ENCODE measurements at regions of chr7 and their contacts with region 1.

Region 1: DNA sequence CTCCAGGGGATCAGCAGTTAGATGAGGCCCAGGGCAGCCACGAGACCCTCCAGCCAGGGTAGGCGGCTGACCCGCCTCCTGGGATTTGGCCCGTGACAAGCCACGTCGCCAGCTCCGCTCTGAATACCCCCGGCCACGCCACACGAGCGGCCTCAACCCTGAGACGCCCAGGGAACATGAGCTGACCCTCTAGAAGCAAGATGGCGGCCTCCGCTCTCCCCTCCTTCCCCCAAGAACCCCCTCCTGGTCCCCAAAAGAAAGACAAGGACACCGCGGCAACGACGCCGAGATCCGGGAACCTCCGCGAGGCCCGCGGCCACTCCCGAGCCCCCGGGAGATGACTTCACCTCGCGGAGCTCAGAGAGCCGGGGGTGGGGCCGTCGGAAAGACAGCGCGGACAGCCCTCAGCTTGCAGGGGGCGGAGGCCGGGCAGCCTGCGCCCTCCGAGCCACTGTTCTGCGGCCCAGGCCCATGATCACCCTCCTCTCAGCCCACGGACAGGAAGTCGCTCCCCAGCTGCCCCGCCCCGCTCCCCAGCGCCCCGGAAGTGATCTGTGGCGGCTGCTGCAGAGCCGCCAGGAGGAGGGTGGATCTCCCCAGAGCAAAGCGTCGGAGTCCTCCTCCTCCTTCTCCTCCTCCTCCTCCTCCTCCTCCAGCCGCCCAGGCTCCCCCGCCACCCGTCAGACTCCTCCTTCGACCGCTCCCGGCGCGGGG is at the start of gene RALA:
- DNase-seq: peak; percentile 84
- ATAC-seq: peak; percentile 91
- H3K4me3 Mint-ChIP-seq: peak within 1 kb of the TSS; percentile 94
- H3K27ac Mint-ChIP-seq: peak within 1 kb of the TSS; percentile 91
- H3K4me1 Mint-ChIP-seq: peaks cover 55% of the 10 kb centered on the region
- H3K27me3 Mint-ChIP-seq: no peaks in the 10 kb centered on the region
- CTCF ChIP-seq: no peak
- total RNA-seq, gene RALA: 32.6 and 37.3 TPM in 2 replicates

Region 2: DNA sequence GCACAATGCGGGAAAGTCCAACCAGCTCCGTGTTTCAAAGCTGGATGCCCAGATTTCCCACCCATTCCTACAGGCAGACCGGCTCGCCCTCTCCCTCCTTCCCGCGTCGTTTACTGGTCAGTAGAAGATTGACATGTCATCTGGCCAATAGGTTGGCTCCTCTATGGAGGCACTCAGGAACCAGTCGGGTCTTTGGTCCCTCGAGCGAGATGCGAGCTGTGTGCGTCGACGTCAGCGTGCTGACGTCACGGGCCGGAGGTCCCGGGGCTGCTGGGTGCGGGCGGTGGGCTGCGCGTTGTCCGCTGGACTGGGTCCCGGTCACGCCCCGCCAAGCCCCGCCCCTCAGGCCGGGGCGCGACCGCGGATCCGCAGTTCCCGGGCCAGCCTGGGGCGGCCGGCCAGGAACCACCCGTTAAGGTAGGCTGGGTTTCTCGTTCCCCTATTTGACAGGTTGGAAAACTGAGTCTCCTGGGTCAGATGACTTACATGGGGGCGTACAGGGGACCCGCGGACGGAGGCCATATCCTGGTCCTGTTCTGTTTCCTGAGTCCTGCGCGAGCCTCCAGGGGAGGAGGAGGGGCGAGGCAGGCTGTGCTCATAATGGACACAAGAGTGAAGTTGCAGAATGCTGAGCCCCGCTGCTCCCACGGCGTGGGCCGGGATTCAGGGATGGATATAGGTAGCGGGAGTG is 1445.0 kb before region 1 on chr7 and contains the start of gene STARD3NL:
- CTCF ChIA-PET with region 1: no interaction called
- POLR2A ChIA-PET with region 1: no interaction called
- intact Hi-C with region 1: loop called (anchors 10 kb)
- DNase-seq: peak; percentile 81
- ATAC-seq: peak; percentile 96
- H3K4me3 Mint-ChIP-seq: peak within 1 kb of the TSS; percentile 97
- H3K27ac Mint-ChIP-seq: peak within 1 kb of the TSS; percentile 93
- H3K4me1 Mint-ChIP-seq: peaks cover 36% of the 10 kb centered on the region
- H3K27me3 Mint-ChIP-seq: no peaks in the 10 kb centered on the region
- CTCF ChIP-seq: no peak
- total RNA-seq, gene STARD3NL: 16.2 and 17.4 TPM in 2 replicates

Region 3: GRCh38 chr7:39566023-39566921 is 56.9 kb before region 1 on chr7 and contains the start of gene YAE1:
- CTCF ChIA-PET with region 1: no interaction called
- POLR2A ChIA-PET with region 1: interaction called, 13 read pairs
- intact Hi-C with region 1: loop called (anchors 1 kb)
- DNase-seq: peak; percentile 79
- ATAC-seq: peak; percentile 96
- H3K4me3 Mint-ChIP-seq: peak within 1 kb of the TSS; percentile 99
- H3K27ac Mint-ChIP-seq: peak within 1 kb of the TSS; percentile 91
- H3K4me1 Mint-ChIP-seq: peaks cover 22% of the 10 kb centered on the region
- H3K27me3 Mint-ChIP-seq: peaks cover 1% of the 10 kb centered on the region
- CTCF ChIP-seq: no peak
- total RNA-seq, gene YAE1: 13.3 and 16.1 TPM in 2 replicates

Region 4: DNA sequence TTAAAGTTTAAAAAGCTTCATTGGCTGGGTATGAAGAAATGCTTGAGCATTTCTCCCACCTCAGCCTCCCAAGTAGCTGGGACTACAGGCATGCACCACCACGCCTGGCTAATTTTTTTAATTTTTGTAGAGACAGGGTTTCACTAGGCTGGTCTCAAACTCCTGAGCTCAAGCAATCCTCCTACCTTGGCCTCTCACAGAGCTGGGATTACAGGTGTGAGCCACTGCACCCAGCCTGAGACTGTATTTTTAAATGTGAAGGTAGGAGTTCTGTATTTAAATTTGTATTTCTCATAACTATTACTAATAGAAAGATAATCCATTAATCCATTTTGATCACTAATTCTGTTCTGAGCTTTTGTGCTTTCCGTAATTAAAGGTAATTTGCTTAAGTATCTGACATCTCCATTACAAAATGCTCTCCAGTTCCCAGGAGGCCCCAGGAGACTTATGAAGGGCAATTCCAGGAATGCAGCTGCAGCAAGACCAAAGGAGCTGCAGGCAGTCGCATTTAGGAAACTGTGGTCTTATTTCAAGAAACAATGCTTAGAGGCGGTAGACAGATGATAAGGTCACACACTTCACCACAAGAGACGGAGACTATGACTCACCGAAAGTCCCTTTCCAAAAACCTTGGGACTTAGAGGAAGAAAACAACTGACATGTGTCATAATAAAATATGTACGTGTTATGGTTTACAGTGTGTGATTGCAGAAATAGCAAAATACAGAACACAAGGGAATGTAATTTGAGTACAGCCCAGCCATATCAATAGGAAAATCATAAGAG is 33.7 kb before region 1 on chr7:
- CTCF ChIA-PET with region 1: interaction called, 4 read pairs
- POLR2A ChIA-PET with region 1: interaction called, 5 read pairs
- intact Hi-C with region 1: loop called (anchors 2 kb)
- DNase-seq: no peak
- ATAC-seq: peak; percentile 77
- H3K4me3 Mint-ChIP-seq: no peak overlapping the region
- H3K27ac Mint-ChIP-seq: peak overlapping the region; percentile 2
- H3K4me1 Mint-ChIP-seq: peaks cover 12% of the 10 kb centered on the region
- H3K27me3 Mint-ChIP-seq: no peaks in the 10 kb centered on the region
- CTCF ChIP-seq: no peak

Region 5: GRCh38 chr7:39732837-39733804 is 109.9 kb after region 1 on chr7:
- CTCF ChIA-PET with region 1: interaction called, 6 read pairs
- POLR2A ChIA-PET with region 1: interaction called, 80 read pairs
- intact Hi-C with region 1: loop called (anchors 1 kb)
- DNase-seq: peak; percentile 95
- ATAC-seq: peak; percentile 89
- H3K4me3 Mint-ChIP-seq: peak overlapping the region; percentile 89
- H3K27ac Mint-ChIP-seq: peak overlapping the region; percentile 94
- H3K4me1 Mint-ChIP-seq: peaks cover 52% of the 10 kb centered on the region
- H3K27me3 Mint-ChIP-seq: no peaks in the 10 kb centered on the region
- CTCF ChIP-seq: no peak

Region 6: DNA sequence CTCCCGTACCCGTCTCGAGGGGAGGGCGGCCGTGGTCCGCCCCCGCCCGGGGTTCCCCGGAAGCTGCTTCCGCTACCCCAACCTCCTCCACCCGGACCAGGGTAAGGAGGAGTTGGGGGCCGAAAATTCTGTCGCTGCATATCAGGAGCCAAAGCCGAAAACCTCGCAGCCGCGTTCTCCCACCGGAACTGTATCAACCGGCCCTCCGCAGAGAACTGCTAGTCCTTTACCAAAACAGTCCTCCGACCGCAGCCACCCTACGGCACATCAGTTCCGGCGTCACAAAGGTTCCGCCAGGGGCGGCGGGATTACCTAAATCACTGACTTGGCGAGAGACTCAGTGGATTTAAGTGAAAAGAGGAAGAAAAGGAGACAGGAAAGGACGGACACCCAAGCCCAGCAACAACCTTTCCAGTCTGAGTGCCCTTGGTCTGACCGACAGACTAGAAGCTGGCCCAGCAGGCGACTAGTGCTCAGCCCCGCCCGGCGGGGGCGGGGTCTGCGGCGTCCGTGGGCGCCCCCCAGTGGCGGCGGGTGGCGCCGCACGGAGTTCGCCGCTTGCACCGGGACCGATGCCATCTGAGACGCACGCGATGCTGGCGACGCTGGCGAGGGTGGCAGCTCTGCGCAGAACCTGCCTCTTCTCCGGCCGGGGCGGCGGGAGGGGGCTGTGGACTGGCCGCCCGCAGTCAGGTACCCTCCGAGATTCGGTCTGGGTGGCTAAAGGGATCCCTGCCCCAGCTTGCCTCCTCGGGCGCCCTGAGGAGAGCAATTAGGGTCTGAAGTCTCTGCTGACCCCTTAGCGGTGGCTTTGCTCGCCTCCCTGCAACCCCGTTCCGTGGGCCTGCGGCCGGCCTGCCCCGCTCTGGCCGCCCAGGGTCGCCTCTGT is 511.5 kb after region 1 on chr7 and contains the starts of genes MPLKIP and SUGCT:
- CTCF ChIA-PET with region 1: interaction called, 3 read pairs
- POLR2A ChIA-PET with region 1: interaction called, 3 read pairs
- intact Hi-C with region 1: loop called (anchors 1 kb)
- DNase-seq: peak; percentile 91
- ATAC-seq: peak; percentile 90
- H3K4me3 Mint-ChIP-seq: peak within 1 kb of the TSS; percentile 97
- H3K27ac Mint-ChIP-seq: peak within 1 kb of the TSS; percentile 97
- H3K4me1 Mint-ChIP-seq: peaks cover 35% of the 10 kb centered on the region
- H3K27me3 Mint-ChIP-seq: no peaks in the 10 kb centered on the region
- CTCF ChIP-seq: no peak
- total RNA-seq, gene MPLKIP: 29.9 and 35.1 TPM in 2 replicates
- total RNA-seq, gene SUGCT: 0.61 and 1.3 TPM in 2 replicates